Common myeloid progenitor, CD34-positive (primary cell): ENCODE measurements at regions of chr10 and their contacts with region 1.

Region 1: DNA sequence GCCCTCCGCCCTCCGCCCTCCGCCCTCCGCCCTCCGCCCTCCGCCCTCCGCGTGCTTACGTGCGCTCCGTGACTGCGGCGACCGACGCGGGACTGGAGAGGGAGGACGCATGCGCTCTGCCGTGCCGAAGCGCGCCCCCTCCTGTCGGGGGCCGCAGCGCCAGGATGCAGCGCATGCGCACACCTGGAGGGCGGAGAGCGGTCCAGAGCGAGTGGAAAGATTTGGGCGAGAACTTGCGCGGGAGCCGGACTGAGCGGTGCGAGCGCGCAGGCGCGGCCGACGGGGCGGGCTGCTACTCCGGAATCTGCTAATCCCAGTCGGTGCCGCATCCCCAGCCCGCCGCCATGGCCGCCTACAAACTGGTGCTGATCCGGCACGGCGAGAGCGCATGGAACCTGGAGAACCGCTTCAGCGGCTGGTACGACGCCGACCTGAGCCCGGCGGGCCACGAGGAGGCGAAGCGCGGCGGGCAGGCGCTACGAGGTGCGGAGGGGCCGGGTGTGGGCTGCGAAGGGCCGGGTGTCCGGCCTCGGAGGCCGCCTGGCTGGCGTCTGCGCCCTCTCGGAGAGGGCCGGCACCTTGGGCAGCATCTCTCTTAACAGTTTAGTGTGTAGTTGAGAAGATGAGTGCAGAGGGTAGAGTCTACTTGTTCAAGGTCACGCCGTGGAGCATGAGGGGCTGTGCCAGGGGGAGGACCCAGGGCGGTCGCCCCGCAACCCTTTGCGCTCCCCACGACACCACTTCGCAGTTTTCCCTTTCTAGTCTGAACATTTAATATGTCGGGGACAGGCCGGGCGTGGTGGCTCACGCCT is at the start of gene PGAM1:
- DNase-seq: peak; percentile 94 to 97 (median 95)
- H3K4me3 ChIP-seq: peak within 1 kb of the TSS; percentile 78 to 97 (median 88)
- H3K27ac ChIP-seq: peak within 1 kb of the TSS in 1 of 2 experiments; percentile 75
- H3K4me1 ChIP-seq: peaks cover 10 to 40% (median 21%) of the 10 kb centered on the region in 4 experiments
- H3K27me3 ChIP-seq: no peaks in the 10 kb centered on the region

Region 2: DNA sequence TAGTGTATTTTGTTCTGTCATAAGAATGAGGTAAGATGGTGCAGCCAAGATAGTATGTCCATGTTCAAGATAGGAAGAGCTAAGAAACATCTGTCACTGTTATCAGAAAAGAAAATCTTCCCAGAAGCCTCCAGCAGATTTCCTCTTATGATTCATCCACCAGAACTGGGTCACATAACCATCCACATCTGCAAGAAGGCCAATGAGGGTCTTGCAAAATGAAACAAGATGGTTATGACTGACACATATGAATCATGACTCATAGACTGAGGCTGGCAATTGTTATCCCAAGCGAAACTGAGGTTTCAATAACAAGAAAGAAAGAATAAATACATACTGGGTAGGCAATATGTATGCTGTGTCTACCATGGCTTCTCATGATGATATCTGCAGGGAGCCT is 1352.4 kb before region 1 on chr10:
- CTCF ChIA-PET with region 1: no interaction called
- POLR2A ChIA-PET with region 1: no interaction called
- DNase-seq: peak in 2 of 3 donors; percentile 38 to 41
- H3K4me3 ChIP-seq: no peak overlapping the region
- H3K27ac ChIP-seq: no peak overlapping the region
- H3K4me1 ChIP-seq: no peaks in the 10 kb centered on the region
- H3K27me3 ChIP-seq: no peaks in the 10 kb centered on the region

Region 3: GRCh38 chr10:97400665-97401454 is 25.3 kb before region 1 on chr10 and contains the start of gene RRP12:
- CTCF ChIA-PET with region 1: interaction called, 71 read pairs
- POLR2A ChIA-PET with region 1: interaction called, 5 read pairs
- DNase-seq: peak; percentile 99
- H3K4me3 ChIP-seq: peak within 1 kb of the TSS; percentile 65 to 93 (median 90)
- H3K27ac ChIP-seq: peak within 1 kb of the TSS; percentile 95 to 98
- H3K4me1 ChIP-seq: peaks cover 0 to 23% (median 17%) of the 10 kb centered on the region in 4 experiments
- H3K27me3 ChIP-seq: no peaks in the 10 kb centered on the region

Region 4: DNA sequence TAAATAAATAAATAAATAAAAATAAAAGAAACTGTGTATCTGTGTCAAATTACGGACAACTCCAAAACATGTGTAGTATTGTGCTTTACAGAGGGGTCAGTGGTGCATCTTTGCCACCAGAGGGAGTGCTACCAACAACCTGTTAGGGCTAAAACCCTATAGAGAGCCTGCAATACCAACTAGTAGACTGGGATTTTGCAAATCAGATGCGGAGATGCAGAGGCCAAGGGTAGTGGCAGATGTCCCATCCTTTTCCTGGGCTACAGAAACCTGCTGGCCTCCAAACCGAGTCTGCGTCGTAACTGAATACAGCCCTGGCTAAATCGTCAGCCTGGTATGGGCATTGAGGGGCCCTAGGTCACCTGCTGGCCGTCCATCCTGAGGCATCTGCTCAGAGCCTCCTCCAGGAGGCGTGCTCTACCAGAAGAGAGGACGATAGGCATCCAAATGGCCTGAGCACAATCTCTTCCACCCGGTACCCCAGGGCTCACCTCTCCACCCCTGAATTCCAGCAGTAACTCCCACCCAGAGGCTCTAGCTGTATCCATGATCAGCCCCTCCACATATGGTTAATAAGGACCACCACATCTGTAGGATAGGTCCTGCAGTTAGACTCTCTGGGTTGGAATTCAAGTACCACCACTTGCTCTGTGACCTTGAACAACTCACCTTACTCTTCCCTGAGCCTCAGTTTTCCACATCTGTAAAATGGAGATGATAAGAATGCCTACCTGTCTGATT is 18.8 kb before region 1 on chr10:
- CTCF ChIA-PET with region 1: interaction called, 71 read pairs
- POLR2A ChIA-PET with region 1: no interaction called
- DNase-seq: peak; percentile 81 to 88 (median 88)
- H3K4me3 ChIP-seq: peak overlapping the region in 4 of 7 experiments; percentile 16 to 35 (median 31)
- H3K27ac ChIP-seq: no peak overlapping the region
- H3K4me1 ChIP-seq: peaks cover 2 to 34% (median 22%) of the 10 kb centered on the region in 4 experiments
- H3K27me3 ChIP-seq: no peaks in the 10 kb centered on the region

Region 5: DNA sequence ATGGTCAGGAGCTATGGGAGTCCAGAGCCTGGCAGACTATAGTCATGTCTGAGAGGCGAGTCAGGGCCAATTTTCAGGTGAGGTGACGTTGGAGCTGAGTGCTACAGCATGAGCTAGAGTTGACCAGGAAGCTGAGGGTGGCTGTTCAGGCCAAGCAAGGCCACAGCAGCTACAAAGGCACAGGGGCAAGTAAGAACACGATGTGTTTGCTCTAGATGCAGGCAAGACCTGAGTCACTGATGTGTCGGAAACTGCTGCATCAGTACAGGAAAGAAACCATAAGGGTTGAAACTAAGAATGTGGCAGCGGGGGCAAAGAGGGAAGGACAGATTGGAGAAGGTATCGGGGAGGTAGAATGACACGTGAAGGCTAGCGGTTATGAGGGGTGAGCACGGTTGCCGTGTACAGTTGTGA is 13.3 kb before region 1 on chr10:
- CTCF ChIA-PET with region 1: interaction called, 71 read pairs
- POLR2A ChIA-PET with region 1: no interaction called
- DNase-seq: peak in 2 of 3 donors; percentile 41 to 54
- H3K4me3 ChIP-seq: no peak overlapping the region
- H3K27ac ChIP-seq: no peak overlapping the region
- H3K4me1 ChIP-seq: peaks cover 3 to 35% (median 17%) of the 10 kb centered on the region in 4 experiments
- H3K27me3 ChIP-seq: no peaks in the 10 kb centered on the region

Region 6: GRCh38 chr10:97483506-97483905 is 57.3 kb after region 1 on chr10:
- CTCF ChIA-PET with region 1: no interaction called
- POLR2A ChIA-PET with region 1: no interaction called
- DNase-seq: no peak
- H3K4me3 ChIP-seq: no peak overlapping the region
- H3K27ac ChIP-seq: no peak overlapping the region
- H3K4me1 ChIP-seq: no peaks in the 10 kb centered on the region
- H3K27me3 ChIP-seq: no peaks in the 10 kb centered on the region

Region 7: GRCh38 chr10:97584060-97584797 is 158.1 kb after region 1 on chr10 and contains the start of gene HOGA1:
- CTCF ChIA-PET with region 1: no interaction called
- POLR2A ChIA-PET with region 1: no interaction called
- DNase-seq: no peak
- H3K4me3 ChIP-seq: no peak within 1 kb of the TSS
- H3K27ac ChIP-seq: no peak within 1 kb of the TSS
- H3K4me1 ChIP-seq: no peaks in the 10 kb centered on the region
- H3K27me3 ChIP-seq: no peaks in the 10 kb centered on the region